Adrenal gland (tissue), 19 donors: ENCODE measurements at regions of chr7 and their contacts with region 1.

Region 1: GRCh38 chr7:66204822-66205740 is at the start of gene TPST1:
- DNase-seq: peak; percentile 87 to 96 (median 91)
- H3K4me3 ChIP-seq: peak within 1 kb of the TSS; percentile 17 to 99 (median 87)
- H3K27ac ChIP-seq: peak within 1 kb of the TSS in 3 of 5 donors; percentile 62 to 87 (median 76)
- H3K4me1 ChIP-seq: peaks cover 13 to 25% of the 10 kb centered on the region in 2 donors
- H3K27me3 ChIP-seq: no peaks in the 10 kb centered on the region
- CTCF ChIP-seq: peak; percentile 41 to 89 (median 70)
- POLR2A ChIP-seq: peak; percentile 93 to 94
- total RNA-seq, gene TPST1: 22.8 to 70.2 (median 31.5) TPM

Region 2: GRCh38 chr7:66140924-66141323 is 64.2 kb before region 1 on chr7:
- intact Hi-C with region 1: loop called in 1 of 2 experiments (anchors 10 kb)
- DNase-seq: peak; percentile 81 to 96 (median 89)
- H3K4me3 ChIP-seq: no peak overlapping the region
- H3K27ac ChIP-seq: peak overlapping the region; percentile 54 to 84 (median 73)
- H3K4me1 ChIP-seq: peaks cover 3 to 15% of the 10 kb centered on the region in 2 donors
- H3K27me3 ChIP-seq: no peaks in the 10 kb centered on the region
- CTCF ChIP-seq: peak; percentile 53 to 79 (median 73)
- POLR2A ChIP-seq: no peak

Region 3: GRCh38 chr7:66409479-66409878 is 204.4 kb after region 1 on chr7:
- intact Hi-C with region 1: no loop called
- DNase-seq: no peak
- H3K4me3 ChIP-seq: no peak overlapping the region
- H3K27ac ChIP-seq: no peak overlapping the region
- H3K4me1 ChIP-seq: peaks cover 6 to 10% of the 10 kb centered on the region in 2 donors
- H3K27me3 ChIP-seq: no peaks in the 10 kb centered on the region
- CTCF ChIP-seq: no peak
- POLR2A ChIP-seq: no peak